OCI-LY7 (cell line): ENCODE measurements at regions of chr2 and their contacts with region 1.

Region 1: DNA sequence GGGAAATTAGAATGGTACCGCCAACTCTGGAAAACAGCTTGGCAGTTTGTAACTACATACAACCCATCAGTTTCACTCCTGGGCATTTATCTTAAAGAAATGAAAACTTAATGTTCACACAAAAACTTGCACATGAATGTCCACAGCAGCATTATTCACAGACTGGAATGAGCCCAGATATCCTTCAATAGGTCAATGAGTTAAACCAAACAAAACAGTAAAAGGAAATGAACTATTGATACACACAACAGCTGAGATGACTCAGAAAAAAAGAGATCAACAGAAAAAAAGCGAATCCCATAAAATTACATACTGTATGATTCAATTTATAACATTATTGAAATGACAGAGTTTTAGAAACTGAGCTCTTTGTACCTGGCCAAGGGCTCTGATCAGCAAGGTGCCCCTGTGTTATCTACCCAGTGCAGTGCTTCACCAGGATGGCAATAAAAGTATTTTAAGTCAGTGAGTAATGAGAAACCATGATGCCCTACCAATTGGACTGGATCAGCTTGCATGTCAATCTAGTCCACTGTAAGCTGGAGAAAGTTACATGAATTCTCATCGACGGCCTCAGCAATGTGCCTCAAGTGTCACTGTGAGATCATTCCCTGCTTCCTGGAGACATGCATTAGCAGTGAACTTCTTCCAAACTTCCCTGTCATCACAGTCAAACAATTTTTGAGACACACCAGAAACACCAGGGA is 21.9 kb downstream of the TMEM237 start:
- DNase-seq: no peak
- H3K4me3 ChIP-seq: no peak overlapping the region
- H3K27ac ChIP-seq: no peak overlapping the region
- H3K4me1 ChIP-seq: no peaks in the 10 kb centered on the region
- CTCF ChIP-seq: no peak

Region 2: DNA sequence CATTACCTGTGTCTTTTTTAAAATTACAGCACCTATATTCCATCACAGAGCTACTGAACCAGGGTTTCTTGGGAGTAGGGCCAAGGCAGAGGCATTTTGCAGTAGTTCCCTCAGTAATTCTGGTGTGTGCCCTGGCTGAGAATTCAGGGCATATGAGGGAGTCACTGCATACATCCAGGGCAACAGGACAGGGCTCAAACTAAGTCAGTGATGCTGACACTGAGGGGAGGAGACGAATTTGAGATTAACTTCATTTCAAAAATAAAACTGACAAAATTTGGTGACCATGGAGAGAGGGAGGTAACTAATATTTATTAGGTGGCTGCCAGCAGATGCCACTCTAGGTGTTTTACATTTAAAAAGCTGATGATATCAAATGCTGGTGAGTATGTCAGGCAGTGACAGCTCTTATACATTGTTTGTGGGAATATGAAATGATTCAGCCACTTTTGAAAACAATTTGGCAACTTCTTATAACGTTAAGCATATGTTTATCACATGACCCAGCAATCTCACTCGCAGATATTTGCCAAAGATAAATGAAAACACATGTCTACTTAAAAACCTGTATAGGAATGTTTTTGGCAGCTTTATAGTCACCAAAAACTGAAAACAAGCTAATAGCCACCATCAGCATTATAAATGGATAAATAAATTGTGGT is 149.6 kb before region 1 on chr2:
- CTCF ChIA-PET with region 1: no interaction called
- POLR2A ChIA-PET with region 1: interaction called, 11 read pairs
- intact Hi-C with region 1: no loop called
- DNase-seq: no peak
- H3K4me3 ChIP-seq: no peak overlapping the region
- H3K27ac ChIP-seq: no peak overlapping the region
- H3K4me1 ChIP-seq: no peaks in the 10 kb centered on the region
- CTCF ChIP-seq: no peak